Mammary epithelial cell (primary cell): ENCODE measurements at regions of chr12 and their contacts with region 1.

Region 1: DNA sequence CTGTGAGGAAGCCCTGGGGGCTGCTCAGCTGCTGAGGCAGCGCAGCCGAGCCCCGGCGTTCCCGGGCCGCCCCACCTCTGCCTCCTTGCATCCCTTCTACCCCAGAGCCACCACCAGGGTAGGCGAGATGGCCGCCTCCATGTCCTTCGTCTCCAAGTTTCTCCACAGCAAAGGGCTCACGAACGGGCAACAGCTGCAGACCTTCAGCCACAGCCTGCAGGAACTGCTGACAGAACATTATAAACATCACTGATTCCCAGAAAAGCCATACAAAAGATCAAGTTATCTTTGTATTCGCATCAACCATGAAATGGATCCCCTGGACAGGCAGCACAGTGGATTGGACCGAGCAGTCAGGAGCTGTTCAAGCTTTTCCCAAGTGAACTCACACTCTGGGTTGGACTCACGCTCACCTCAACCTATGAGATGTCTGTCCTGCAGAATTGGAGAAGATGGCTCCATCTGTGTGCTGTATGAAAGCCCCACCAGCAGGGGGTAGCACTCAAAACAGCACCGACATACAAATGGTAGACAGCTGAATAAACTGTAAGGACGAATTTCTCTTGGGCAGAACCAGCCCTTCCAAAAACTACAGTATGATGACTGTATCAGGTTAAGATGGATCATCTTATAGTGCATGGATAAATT is 19.4 kb upstream of the A2M start:
- DNase-seq: peak; percentile 12
- H3K4me3 ChIP-seq: no peak overlapping the region
- H3K27ac ChIP-seq: no peak overlapping the region
- H3K4me1 ChIP-seq: peaks cover 15% of the 10 kb centered on the region
- H3K27me3 ChIP-seq: peaks cover 3% of the 10 kb centered on the region
- CTCF ChIP-seq: peak; percentile 46 to 55

Region 2: DNA sequence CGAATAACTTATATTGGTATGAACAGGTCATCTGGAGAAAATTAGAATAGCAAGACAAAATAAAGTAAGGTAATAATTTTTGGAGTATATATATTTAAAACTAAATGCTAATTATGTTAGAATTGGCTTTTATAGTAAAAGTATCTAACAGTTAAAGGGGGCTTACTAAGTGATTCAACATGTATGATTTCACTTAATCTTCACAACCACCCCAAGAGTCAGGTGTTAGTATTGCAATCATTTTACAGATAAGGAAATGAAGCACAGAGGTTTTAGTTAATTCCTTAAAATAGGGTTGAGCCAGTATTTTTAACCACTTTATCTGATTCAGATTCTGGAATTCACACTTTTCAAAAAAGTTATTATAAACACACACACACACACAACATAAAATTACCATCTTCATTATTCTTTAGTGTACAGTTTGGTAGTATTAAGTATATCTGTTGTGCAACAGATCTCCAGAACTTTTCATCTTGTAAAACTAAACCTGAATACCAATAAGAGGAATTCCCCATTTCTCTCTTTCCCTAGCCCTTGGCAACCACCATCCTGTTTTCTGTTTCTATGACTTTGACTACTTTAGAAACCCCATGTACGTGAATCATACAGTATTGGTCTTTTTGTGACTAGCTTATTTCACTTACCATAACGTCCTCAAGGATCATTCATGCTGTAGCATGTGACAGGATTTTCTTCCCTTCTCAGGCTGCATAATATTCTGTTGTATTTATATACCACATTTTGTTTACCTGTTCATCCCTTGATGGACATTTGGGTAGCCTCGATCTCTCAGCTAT is 31.9 kb before region 1 on chr12:
- CTCF ChIA-PET with region 1: no interaction called
- dilution Hi-C with region 1: no loop called
- in situ Hi-C with region 1: no loop called
- intact Hi-C with region 1: no loop called
- DNase-seq: no peak
- H3K4me3 ChIP-seq: no peak overlapping the region
- H3K27ac ChIP-seq: no peak overlapping the region
- H3K4me1 ChIP-seq: no peaks in the 10 kb centered on the region
- H3K27me3 ChIP-seq: peaks cover 2% of the 10 kb centered on the region
- CTCF ChIP-seq: no peak

Region 3: GRCh38 chr12:9237286-9237685 is 102.2 kb after region 1 on chr12:
- CTCF ChIA-PET with region 1: no interaction called
- dilution Hi-C with region 1: loop called (anchors 5 kb)
- in situ Hi-C with region 1: no loop called
- intact Hi-C with region 1: no loop called
- DNase-seq: peak; percentile 46
- H3K4me3 ChIP-seq: no peak overlapping the region
- H3K27ac ChIP-seq: no peak overlapping the region
- H3K4me1 ChIP-seq: no peaks in the 10 kb centered on the region
- H3K27me3 ChIP-seq: no peaks in the 10 kb centered on the region
- CTCF ChIP-seq: no peak

Region 4: GRCh38 chr12:9256341-9256740 is 121.2 kb after region 1 on chr12:
- CTCF ChIA-PET with region 1: no interaction called
- dilution Hi-C with region 1: no loop called
- in situ Hi-C with region 1: no loop called
- intact Hi-C with region 1: loop called (anchors 10 kb)
- DNase-seq: no peak
- H3K4me3 ChIP-seq: no peak overlapping the region
- H3K27ac ChIP-seq: no peak overlapping the region
- H3K4me1 ChIP-seq: no peaks in the 10 kb centered on the region
- H3K27me3 ChIP-seq: peaks cover 2% of the 10 kb centered on the region
- CTCF ChIP-seq: no peak